ENCODE measurements at regions of chr6 and their contacts with region 1.

Region 1: DNA sequence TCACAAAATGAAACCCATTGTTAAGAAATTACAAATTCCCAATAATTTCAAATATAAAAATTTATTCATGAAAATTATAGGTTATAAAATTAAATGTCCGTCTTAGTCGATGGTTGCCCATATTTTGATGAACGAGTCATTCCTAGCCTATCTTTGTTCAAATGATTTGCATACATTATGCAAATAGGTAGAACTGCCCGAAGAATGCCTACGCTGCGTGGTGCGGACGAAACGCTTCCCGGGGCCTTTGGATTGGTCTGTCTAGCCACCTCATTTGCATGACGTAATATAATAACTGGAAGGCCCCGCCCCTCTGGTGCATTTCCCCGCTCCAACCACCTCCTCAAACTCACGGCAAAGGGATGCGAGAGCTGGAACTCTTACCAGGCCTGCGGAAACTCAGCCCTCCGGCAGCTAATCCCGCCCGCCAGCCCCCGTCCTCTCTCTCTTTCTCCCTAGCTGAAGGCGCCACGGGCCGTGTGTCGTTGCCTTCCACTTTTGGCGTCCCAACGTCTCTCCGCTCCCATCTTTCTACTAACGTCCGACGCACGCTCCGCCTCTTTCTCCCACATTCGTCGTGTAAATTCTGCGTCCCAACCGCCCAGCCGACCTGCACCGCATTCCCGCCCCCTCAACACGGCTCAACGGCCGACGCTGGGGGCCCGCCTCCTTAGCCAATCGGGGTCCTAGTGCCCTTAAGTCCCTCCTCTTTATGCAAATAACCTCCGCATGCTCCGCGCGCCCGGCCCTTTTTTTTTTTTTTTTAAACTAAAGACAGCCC is 520 bp upstream of the PRRC2A start:
- DNase-seq: peak; percentile 96 to 97
- H3K4me3 ChIP-seq: peak overlapping the region; percentile 67
- H3K27ac ChIP-seq: peak overlapping the region; percentile 81
- H3K4me1 ChIP-seq: peaks cover 23% of the 10 kb centered on the region
- H3K27me3 ChIP-seq: no peaks in the 10 kb centered on the region
- CTCF ChIP-seq: no peak

Region 2: DNA sequence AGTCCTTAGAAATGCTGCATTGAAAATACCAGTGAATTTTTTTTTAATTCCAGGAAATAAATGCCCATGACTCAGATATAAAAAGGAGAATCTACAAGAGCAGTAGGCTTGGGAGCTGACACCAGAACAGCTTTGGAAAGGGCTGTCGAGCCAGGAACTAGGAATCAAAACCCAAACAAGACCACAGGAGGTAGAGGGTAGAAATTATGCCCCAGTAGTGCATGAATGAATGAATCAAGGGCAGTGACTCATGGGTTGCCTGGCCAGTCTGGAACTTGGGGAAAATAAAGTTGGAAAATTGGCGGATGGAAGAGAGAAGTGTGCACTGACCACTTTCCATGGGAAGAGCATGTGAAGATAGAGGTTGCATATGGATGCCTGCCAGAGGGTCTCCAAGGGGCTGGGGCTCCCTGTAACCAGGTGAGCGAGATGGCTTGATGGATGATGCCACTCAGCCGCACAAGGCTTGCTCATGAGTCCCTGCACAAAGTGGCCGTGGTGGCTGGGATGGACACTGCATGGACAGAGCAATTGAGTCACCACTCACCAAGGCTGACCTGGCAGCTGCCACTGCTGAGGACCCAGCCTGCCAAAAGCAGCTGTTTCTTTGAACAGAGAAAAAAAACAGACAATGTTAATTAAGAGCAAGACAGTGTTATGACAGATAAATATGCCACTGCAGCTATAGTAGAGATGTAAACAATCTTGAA is 106.4 kb before region 1 on chr6:
- CTCF ChIA-PET with region 1: no interaction called
- POLR2A ChIA-PET with region 1: no interaction called
- intact Hi-C with region 1: no loop called
- DNase-seq: no peak
- H3K4me3 ChIP-seq: no peak overlapping the region
- H3K27ac ChIP-seq: no peak overlapping the region
- H3K4me1 ChIP-seq: peaks cover 16% of the 10 kb centered on the region
- H3K27me3 ChIP-seq: no peaks in the 10 kb centered on the region
- CTCF ChIP-seq: no peak

Region 3: GRCh38 chr6:31575335-31575901 is 44.6 kb before region 1 on chr6 and contains the start of gene TNF:
- CTCF ChIA-PET with region 1: no interaction called
- POLR2A ChIA-PET with region 1: no interaction called
- intact Hi-C with region 1: no loop called
- DNase-seq: no peak
- H3K4me3 ChIP-seq: no peak within 1 kb of the TSS
- H3K27ac ChIP-seq: no peak within 1 kb of the TSS
- H3K4me1 ChIP-seq: 0 out of 2 replicates have a peak, but pooled peaks cover 5% of the 10 kb centered on the region
- H3K27me3 ChIP-seq: 0 out of 2 replicates have a peak, but pooled peaks cover 5% of the 10 kb centered on the region
- CTCF ChIP-seq: no peak
- total RNA-seq, gene TNF: not detected in 2 replicates

Region 4: GRCh38 chr6:31639449-31639861 is 19.5 kb after region 1 on chr6:
- CTCF ChIA-PET with region 1: no interaction called
- POLR2A ChIA-PET with region 1: interaction called, 3 read pairs
- intact Hi-C with region 1: loop called (anchors 2 kb)
- DNase-seq: no peak
- H3K4me3 ChIP-seq: no peak overlapping the region
- H3K27ac ChIP-seq: no peak overlapping the region
- H3K4me1 ChIP-seq: no peaks in the 10 kb centered on the region
- H3K27me3 ChIP-seq: no peaks in the 10 kb centered on the region
- CTCF ChIP-seq: no peak

Region 5: DNA sequence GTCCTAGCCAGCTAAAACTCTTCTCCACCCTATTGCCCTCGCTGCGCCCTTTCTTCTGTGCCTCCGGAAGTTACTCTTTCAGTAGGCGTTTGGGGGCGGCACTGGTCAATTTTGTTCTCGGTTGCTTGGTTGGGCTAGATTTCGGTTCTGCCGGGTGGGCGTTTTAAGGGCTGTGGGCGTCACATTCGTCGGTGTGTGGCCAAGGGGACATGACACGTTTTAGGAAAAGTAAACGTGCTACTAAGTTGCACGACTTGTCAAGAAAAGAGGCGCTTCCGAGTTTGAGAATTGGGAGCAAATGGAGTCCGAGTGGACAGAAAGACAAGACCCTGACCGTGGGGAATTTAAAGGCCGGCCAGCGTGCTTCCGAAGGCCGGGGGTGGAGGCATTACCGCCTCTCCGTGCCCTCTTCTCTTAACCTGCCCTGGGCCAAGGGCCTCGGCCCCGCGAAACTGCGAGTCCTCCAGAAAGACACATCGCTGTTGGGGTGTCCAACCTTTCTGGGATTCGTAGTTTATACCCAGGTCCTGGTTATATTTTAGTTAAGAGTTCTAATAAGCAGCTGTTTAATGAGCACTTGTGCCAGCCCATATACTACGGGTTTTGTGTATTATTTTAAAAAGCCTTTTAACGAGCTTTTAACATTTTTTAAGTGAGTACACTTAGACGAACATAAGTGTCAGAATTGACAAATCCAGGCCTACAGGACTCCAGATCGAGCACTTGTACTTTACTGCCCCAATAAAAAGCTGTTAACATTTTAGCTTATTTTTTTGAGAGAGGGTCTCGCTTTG is 33.1 kb after region 1 on chr6:
- CTCF ChIA-PET with region 1: no interaction called
- POLR2A ChIA-PET with region 1: interaction called, 8 read pairs
- intact Hi-C with region 1: loop called (anchors 1 kb)
- DNase-seq: peak in 1 of 2 experiments; percentile 86
- H3K4me3 ChIP-seq: peak overlapping the region; percentile 79
- H3K27ac ChIP-seq: peak overlapping the region; percentile 92
- H3K4me1 ChIP-seq: peaks cover 14% of the 10 kb centered on the region
- H3K27me3 ChIP-seq: no peaks in the 10 kb centered on the region
- CTCF ChIP-seq: no peak; the same call in 1 of the 2 replicates